ENCODE measurements at regions of chr6 and their contacts with region 1.

Region 1: GRCh38 chr6:52419809-52420670 is at the start of gene EFHC1:
- DNase-seq: peak; percentile 98

Region 2: GRCh38 chr6:52664186-52664990 is 244.3 kb after region 1 on chr6:
- in situ Hi-C with region 1: loop called (anchors 10 kb)
- DNase-seq: peak; percentile 94

Measured in KBM-7 (cell line).